AG04449 (cell line): ENCODE measurements at regions of chr9 and their contacts with region 1.

Region 1: GRCh38 chr9:36023260-36024048 is 13.3 kb upstream of the RECK start:
- DNase-seq: no peak
- H3K4me3 ChIP-seq: no peak overlapping the region
- CTCF ChIP-seq: peak; percentile 81

Region 2: GRCh38 chr9:35829084-35829763 is 194.2 kb before region 1 on chr9 and contains the start of gene TMEM8B:
- CTCF ChIA-PET with region 1: interaction called, 12 read pairs
- POLR2A ChIA-PET with region 1: no interaction called
- DNase-seq: no peak
- H3K4me3 ChIP-seq: peak within 1 kb of the TSS; percentile 69
- CTCF ChIP-seq: no peak

Region 3: GRCh38 chr9:35945341-35946018 is 78.0 kb before region 1 on chr9:
- CTCF ChIA-PET with region 1: interaction called, 51 read pairs
- POLR2A ChIA-PET with region 1: no interaction called
- DNase-seq: no peak
- H3K4me3 ChIP-seq: no peak overlapping the region
- CTCF ChIP-seq: peak; percentile 86

Region 4: GRCh38 chr9:35962126-35962906 is 61.1 kb before region 1 on chr9:
- CTCF ChIA-PET with region 1: interaction called, 342 read pairs
- POLR2A ChIA-PET with region 1: interaction called, 14 read pairs
- DNase-seq: peak; percentile 46
- H3K4me3 ChIP-seq: peak overlapping the region; percentile 45
- CTCF ChIP-seq: no peak

Region 5: DNA sequence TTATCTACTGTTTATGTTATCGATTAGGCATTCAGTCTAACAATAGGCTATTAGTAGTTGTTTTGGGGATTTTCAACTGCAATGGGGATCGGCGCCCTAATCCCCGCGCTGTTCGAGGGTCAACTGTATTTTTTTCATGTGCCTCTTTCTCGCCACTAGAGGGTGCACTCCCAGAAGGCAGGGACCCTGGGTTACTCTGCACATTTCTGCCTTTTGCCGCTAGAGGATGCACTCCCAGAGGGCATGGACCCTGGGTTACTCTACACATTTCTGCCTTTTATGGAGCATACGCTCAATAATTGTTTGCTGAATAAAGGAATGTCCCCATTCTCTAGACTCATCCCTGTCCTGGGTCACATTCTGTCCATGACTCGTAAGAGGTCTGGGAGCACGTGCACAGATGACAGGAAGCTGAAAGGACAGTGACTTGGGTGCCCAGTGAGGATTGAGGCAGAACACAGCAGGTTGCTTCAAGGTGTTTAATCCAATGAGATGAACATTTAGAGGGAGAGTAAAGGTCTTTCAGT is 14.6 kb before region 1 on chr9:
- CTCF ChIA-PET with region 1: interaction called, 179 read pairs
- POLR2A ChIA-PET with region 1: no interaction called
- DNase-seq: no peak
- H3K4me3 ChIP-seq: no peak overlapping the region
- CTCF ChIP-seq: peak; percentile 75

Region 6: GRCh38 chr9:36166101-36166927 is 142.9 kb after region 1 on chr9:
- CTCF ChIA-PET with region 1: interaction called, 11 read pairs
- POLR2A ChIA-PET with region 1: no interaction called
- DNase-seq: no peak
- H3K4me3 ChIP-seq: peak overlapping the region; percentile 63
- CTCF ChIP-seq: peak; percentile 95